Right ventricle myocardium inferior (tissue), 1 donor: ENCODE measurements at regions of chr12 and their contacts with region 1.

Region 1: DNA sequence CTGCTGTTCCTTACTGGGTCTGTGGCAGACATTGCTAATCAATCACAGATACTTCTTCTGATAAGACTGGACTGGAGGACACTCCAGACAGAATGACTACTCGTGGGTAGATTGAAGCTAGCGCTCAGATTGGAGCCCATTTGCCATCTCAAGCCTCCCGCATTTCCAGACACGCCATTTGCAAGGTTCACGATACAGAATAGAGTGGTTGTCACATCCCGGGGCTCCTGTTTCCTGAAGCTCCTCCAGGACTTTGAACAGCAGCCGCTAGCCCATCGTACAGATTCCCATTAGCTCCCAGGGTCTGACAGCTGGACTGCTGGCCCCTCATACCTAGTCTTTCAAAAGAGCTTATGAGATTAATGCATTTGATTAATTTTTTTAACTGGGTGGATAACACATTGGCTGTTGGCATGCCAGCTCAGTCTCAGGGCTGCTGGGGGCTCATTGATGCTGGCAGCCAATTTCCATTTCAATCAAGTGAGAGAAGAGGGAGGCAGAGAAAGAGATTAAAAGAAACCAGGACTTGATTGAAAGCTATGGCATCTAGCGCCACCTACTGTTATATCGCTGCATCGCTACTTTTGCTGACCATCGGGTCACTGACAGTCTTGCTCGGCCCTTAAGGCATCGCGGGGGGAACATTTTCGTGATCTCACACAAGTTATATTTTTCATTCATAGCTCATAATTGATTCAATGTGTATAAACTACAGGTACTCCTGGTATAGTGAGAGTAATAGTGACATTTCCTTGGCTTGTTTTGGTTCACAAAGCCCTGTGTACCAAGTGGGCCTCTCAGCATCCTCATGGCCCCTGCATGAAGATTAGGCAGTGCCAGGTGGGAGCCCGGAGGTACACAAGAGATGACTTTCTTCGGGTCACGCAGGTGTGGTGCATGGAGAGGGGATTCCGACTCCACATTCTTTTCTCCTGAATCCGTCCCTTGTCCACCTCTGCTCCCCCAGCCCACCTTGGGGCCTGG is 78.6 kb downstream of the CCDC60 start:
- DNase-seq: no peak
- ATAC-seq: peak; percentile 38

Region 2: DNA sequence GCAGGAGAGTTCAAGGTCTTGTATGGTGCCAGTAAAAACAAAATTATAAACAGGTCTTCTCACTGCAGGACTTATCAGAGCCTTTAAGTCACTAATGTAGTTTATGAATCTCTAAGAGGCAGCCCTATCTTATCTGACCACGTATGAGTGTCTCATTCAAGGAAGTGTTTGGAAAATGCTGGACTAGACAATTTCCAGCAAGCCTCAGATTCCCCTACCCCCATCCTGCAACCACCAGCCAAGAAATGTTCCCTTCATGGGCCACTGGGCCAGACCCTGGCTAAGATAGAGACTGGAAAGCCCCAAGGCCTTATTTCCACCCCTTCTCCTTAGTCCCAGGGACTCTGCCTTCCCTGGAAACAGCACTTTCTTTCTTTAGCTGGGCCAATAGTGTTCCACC is 230.0 kb before region 1 on chr12:
- intact Hi-C with region 1: loop called (anchors 2 kb)
- DNase-seq: no peak
- ATAC-seq: peak; percentile 22

Region 3: DNA sequence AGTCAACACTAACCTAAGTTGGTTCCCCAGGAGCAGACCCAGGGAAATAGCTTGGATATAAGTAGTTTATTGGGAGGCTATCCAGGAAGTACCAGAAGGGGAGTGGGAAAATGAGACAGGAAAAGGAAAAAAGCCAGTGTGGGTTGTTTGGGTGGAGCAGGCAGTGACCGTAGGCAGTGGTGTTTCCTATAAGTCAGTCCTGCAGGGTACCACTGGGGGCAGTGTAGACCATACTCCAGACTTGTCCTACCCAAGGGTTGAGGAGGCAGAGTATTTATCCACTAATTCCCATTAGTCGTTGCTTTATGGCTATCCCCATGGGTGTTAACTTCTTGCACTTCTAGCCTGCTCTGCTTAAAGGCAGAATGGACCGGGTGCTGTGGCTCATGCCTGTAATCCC is 85.0 kb before region 1 on chr12:
- intact Hi-C with region 1: loop called (anchors 2 kb)
- DNase-seq: no peak
- ATAC-seq: peak; percentile 66